Stomach (tissue), 19 donors: ENCODE measurements at regions of chr17 and their contacts with region 1.

Region 1: GRCh38 chr17:74280093-74280513 is 6.1 kb downstream of the DNAI2 start:
- DNase-seq: peak in 1 of 2 donors; percentile 42
- H3K4me3 ChIP-seq: no peak overlapping the region
- H3K27ac ChIP-seq: no peak overlapping the region
- H3K4me1 ChIP-seq: peaks cover 0 to 16% (median 8%) of the 10 kb centered on the region in 4 donors
- H3K27me3 ChIP-seq: peaks cover 0 to 54% (median 10%) of the 10 kb centered on the region in 3 donors
- CTCF ChIP-seq: no peak
- EP300 ChIP-seq: no peak
- POLR2A ChIP-seq: no peak

Region 2: GRCh38 chr17:74199306-74200092 is 80.6 kb before region 1 on chr17:
- intact Hi-C with region 1: no loop called
- DNase-seq: peak; percentile 77 to 87
- H3K4me3 ChIP-seq: peak overlapping the region in 1 of 4 donors; percentile 28
- H3K27ac ChIP-seq: no peak overlapping the region
- H3K4me1 ChIP-seq: peaks cover 8 to 22% (median 20%) of the 10 kb centered on the region in 4 donors
- H3K27me3 ChIP-seq: peaks cover 0 to 75% (median 28%) of the 10 kb centered on the region in 3 donors
- CTCF ChIP-seq: peak in 5 of 7 experiments; percentile 59 to 97 (median 96)
- EP300 ChIP-seq: no peak
- POLR2A ChIP-seq: no peak

Region 3: GRCh38 chr17:74212913-74213791 is 67.0 kb before region 1 on chr17 and contains the start of gene TTYH2:
- intact Hi-C with region 1: loop called (anchors 10 kb)
- DNase-seq: peak; percentile 88 to 96
- H3K4me3 ChIP-seq: peak within 1 kb of the TSS; percentile 48 to 63 (median 52)
- H3K27ac ChIP-seq: peak within 1 kb of the TSS; percentile 67 to 84 (median 75)
- H3K4me1 ChIP-seq: peaks cover 28 to 77% (median 52%) of the 10 kb centered on the region in 4 donors
- H3K27me3 ChIP-seq: peaks cover 0 to 11% (median 0%) of the 10 kb centered on the region in 3 donors
- CTCF ChIP-seq: peak in 1 of 7 experiments; percentile 1
- EP300 ChIP-seq: no peak
- POLR2A ChIP-seq: no peak
- total RNA-seq, gene TTYH2: 0.58 to 17.9 (median 2.8) TPM